ENCODE measurements at regions of chr9 and their contacts with region 1.

Region 1: DNA sequence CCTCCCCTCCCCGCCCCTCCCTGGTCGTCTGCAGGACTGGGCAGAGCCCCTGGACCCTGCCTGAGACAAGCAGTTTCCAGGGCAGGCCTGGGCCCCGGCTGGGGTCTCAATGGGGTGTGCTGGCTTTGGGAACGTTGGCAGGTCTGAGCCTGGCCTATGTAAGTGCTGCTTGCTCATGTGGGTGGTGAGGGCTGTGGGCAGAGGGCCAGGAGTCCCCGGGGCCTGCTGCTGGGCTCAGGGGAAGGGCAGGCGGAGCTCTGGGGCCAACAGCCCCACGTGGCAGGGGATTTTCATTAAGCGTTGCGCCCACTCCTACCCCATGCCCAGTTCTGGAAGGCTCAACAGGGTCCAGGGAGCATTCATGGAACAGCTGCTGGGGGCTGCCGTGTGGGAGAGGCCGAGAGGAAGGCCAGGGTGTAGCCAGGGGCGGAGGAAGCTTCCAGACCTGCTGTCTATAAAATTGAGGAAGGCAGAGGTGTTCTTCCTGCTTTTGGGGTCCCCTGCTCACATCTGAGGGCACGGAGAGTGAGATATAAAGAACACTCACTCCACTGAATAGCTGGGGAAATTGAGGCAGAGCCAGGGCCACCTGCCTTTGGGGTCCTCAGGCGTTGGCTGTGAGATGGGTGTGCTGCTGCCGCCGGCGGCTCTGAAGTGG is 32.5 kb downstream of the RXRA start:
- DNase-seq: peak; percentile 74
- H3K4me3 ChIP-seq: no peak overlapping the region
- H3K27ac ChIP-seq: peak overlapping the region in 1 of 2 experiments; percentile 56; a peak in 2 of 4 replicates
- H3K4me1 ChIP-seq: peaks cover 18 to 87% of the 10 kb centered on the region in 2 experiments
- H3K27me3 ChIP-seq: no peaks in the 10 kb centered on the region
- CTCF ChIP-seq: no peak
- EP300 ChIP-seq: no peak
- RAD21 ChIP-seq: no peak

Region 2: GRCh38 chr9:134344068-134344799 is 14.6 kb before region 1 on chr9:
- CTCF ChIA-PET with region 1: interaction called, 4 read pairs
- POLR2A ChIA-PET with region 1: interaction called, 10 read pairs
- DNase-seq: no peak
- H3K4me3 ChIP-seq: no peak overlapping the region
- H3K27ac ChIP-seq: no peak overlapping the region
- H3K4me1 ChIP-seq: peaks cover 0 to 77% of the 10 kb centered on the region in 2 experiments; a peak in 1 of 4 replicates
- H3K27me3 ChIP-seq: no peaks in the 10 kb centered on the region
- CTCF ChIP-seq: peak; percentile 13; the same call in 1 of the 2 replicates
- EP300 ChIP-seq: no peak
- RAD21 ChIP-seq: no peak

Region 3: GRCh38 chr9:134768709-134769351 is 410.0 kb after region 1 on chr9:
- CTCF ChIA-PET with region 1: no interaction called
- POLR2A ChIA-PET with region 1: no interaction called
- DNase-seq: peak; percentile 60
- H3K4me3 ChIP-seq: no peak overlapping the region
- H3K27ac ChIP-seq: no peak overlapping the region
- H3K4me1 ChIP-seq: peaks cover 0 to 21% of the 10 kb centered on the region in 2 experiments; a peak in 1 of 4 replicates
- H3K27me3 ChIP-seq: no peaks in the 10 kb centered on the region
- CTCF ChIP-seq: no peak
- EP300 ChIP-seq: no peak
- RAD21 ChIP-seq: no peak